ENCODE measurements at regions of chr13 and their contacts with region 1.

Region 1: GRCh38 chr13:43905435-43906031 is 25.8 kb downstream of the LACC1 start:
- DNase-seq: no peak
- ATAC-seq: peak; percentile 65

Region 2: DNA sequence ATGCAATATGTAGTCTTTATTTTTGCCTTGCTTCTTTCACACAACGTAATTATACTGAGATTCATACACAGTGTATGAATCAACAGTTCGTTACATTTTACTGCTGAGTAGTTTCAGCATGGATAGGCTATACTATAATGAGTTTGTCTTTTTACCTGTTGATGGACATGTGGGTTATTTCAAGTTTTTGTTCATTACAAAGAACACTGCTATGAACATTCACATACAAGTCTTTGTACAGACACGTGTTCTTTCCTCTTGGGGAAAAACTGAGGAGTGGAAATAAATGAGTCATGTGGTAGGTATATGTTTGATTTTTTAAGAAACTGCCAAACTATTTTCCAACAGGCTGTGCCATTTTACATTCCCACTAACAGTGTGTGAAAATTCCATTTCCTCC is 153.9 kb before region 1 on chr13:
- intact Hi-C with region 1: no loop called
- DNase-seq: no peak
- ATAC-seq: no peak

Region 3: GRCh38 chr13:43848001-43848649 is 57.4 kb before region 1 on chr13:
- intact Hi-C with region 1: no loop called
- DNase-seq: peak; percentile 58
- ATAC-seq: no peak

Region 4: GRCh38 chr13:43986421-43986981 is 81.0 kb after region 1 on chr13:
- intact Hi-C with region 1: loop called (anchors 2 kb)
- DNase-seq: no peak
- ATAC-seq: peak; percentile 89

Region 5: DNA sequence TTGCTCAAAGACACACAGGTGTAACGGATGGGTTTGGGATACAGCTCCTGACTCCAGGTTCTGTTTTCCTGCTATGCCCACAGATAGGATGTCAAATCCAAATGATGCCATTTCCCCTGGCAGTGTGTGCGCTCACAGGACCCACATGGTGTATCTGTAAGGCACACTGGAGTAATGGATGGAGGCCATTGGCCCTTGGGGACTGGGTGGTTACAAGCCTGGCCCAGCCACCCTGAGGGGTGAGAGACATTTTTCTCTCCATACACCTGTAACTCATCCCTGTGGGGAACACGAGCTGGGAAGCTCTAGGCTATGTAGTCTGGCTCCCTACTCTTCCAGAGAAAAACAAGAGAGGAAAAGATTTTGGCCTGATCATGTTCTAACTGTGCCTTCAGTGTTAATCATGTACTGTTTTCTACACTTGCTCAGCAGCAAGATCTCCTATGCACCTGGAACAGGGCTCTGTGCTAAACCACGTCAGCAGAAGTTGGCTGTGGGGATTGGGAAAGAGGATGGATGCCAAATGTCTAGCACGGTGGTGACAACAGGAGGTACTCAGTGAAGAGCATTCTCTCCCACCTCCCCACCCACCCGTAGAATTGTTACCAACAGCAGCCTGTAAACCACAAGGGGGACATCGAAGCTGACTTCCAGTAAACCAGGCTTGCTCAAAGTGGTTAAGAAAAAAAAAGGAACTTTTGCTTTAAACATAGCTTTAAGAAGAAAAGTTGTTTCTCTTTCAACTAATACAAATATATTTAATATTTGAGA is 211.2 kb after region 1 on chr13:
- intact Hi-C with region 1: loop called (anchors 5 kb)
- DNase-seq: no peak
- ATAC-seq: peak; percentile 95

Region 6: GRCh38 chr13:44197791-44198770 is 292.5 kb after region 1 on chr13:
- intact Hi-C with region 1: loop called (anchors 5 kb)
- DNase-seq: no peak
- ATAC-seq: peak; percentile 37

Region 7: DNA sequence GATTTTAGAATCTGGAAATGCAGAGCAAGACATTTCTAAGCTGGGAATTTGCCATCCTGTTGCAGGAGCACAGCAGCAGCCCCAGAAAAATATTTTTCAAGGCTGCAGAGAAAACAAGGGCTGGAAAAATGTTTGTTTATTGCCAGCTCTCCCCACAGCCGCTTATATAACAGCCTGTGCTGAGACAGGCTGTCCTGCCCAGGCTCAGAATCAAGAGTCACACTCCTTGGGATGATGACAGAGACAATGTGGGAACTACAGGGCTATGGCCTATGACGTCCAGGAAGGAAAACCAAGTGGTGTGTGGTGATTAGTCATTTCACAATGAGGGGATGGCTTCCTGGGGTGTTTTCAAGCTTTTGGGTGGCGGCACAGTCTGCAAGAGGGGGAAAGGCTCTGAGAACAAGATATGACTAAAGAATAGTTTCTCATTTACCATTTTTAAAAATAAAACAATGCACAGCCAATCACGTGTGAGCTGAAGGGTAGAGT is 331.8 kb after region 1 on chr13:
- intact Hi-C with region 1: loop called (anchors 10 kb)
- DNase-seq: no peak
- ATAC-seq: peak; percentile 98

Region 8: GRCh38 chr13:44373601-44374348 is 468.2 kb after region 1 on chr13 and contains the start of gene SERP2:
- intact Hi-C with region 1: no loop called
- DNase-seq: peak; percentile 60
- ATAC-seq: peak; percentile 79
- total RNA-seq, gene SERP2: 15.7 TPM

Region 9: DNA sequence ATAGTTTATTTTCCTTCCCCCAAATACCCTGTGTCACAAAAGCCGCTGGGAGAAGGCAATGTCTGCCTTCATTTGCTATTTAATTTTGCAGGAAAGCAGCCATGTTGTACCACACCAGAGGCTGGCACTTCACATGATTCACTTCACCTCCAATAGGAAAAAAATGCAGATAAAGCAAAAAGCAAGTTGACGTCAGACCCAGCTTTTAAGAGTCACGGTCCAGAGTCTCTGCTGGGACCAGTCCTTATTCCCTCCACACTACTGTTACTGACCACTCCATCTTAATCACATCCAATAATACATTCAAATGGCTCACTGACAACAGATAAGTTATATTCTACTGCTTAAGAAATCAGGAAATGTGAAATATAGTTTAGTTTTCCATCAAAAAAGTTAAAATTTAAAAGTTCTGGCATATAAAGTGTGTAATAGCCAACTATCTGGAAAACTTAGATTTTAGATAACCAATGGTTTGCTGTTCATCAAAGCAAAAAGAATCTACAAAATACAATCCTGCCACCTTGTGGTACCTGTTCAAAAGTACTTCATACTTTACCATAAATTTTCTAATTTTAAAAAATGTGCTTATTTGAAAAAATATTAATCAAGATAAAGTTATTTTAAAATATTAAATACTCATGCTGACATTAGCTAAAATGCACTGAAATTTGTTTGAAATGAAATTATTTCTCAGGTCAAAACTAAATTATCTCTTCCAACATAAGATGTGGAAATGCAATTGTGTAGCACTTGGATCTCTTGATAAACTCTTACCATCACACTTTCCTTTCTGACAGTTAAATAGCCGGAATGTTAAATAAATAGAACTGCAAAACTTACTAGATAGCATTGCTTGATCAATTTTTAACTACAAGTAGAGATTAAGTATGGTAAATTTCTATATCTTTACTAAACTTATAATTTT is 565.4 kb after region 1 on chr13:
- intact Hi-C with region 1: loop called (anchors 2 kb)
- DNase-seq: no peak
- ATAC-seq: no peak

Region 10: DNA sequence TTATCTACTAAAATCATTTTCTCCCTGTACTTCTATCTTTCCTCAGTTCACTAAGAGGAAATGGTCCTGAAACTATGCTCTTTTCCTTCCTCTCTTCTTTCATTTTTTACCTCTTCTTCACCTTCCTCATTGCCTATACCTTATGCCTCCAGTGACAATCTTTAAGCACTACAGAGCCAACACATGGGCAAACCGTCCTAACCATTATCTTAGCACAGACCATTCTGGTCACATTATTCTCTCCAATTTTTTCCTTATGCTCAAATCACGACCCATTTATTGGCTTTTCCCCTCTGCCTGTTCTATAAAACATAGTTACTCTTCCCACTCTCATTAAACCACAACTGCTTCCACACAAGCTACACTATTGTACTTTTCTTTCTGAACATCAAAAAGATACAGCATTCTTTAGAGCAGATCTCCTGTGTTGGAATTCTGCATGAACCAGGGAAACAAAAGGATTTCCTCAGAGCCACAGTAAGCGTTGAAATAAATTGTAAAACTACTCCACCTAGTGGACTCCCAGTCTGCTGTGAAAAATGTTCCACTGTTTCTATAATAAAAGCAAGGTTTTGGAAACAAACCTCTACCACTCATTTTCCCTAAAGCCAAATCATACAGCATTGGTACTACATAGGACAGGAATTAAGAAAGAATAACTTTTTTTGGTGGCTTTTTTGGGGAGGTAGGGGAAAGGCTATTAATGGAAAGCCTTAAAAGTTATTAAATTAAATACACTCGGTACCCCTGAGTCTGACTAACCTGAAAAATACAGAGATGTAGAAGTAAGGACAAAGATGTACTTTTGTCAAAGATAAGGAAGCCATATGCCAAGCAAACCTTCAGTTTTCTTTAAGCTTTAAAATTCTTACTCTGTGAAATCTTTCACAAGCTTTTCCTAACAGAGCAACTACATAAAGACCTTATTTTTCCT is 1064.3 kb after region 1 on chr13:
- intact Hi-C with region 1: loop called (anchors 2 kb)
- DNase-seq: no peak
- ATAC-seq: peak; percentile 60